Activated CD4-positive, alpha-beta memory T cell treated with anti-CD3 and anti-CD28 coated beads for 36 hours (primary cell): ENCODE measurements at regions of chr1 and their contacts with region 1.

Region 1: DNA sequence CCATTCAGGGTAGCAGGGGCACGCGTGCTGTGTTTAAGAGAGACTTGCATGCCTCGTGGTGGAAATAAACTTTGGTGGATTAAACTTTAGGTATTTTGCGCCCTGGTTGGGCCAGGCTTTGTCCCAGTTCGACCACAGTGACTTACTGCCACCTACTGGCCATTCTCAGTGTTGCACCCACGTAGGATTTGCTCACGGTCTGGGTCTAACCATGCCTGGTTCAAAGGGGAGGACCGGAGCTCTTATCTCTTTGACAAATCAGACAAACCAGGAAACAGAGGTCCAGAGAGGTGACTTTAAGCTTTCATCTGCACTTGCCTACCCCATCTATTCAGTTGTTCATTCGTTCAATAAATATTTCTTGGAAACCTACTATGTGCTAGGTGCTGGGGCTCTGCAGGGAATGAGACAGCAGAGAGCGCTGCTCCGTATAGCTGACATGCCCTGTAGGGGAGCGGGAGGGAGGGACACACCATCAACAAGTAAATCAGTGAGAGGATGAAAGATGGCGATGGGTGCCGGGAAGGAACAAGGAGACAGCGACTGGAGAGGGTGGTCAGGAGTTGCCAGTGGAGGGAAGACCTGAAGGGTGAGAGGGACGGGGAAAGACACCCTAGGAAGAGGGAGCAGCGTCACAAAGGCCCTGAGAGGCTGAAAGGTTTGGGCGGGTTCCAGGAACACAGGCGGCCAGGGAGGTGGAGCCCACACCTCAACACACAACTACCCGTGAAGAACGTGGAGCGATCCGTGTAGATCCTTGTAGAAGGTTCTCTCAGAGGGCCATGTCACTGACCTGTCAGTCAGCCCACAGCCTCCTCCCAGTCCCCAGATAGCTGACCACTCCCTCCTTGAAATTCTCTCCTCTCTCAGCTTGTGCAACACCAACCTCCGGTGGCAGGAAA is 27.2 kb upstream of the TINAGL1 start:
- DNase-seq: peak; percentile 93
- H3K4me3 Mint-ChIP-seq: peak overlapping the region; percentile 49
- H3K27ac Mint-ChIP-seq: no peak overlapping the region
- H3K4me1 Mint-ChIP-seq: peaks cover 13% of the 10 kb centered on the region
- H3K27me3 Mint-ChIP-seq: peaks cover 9% of the 10 kb centered on the region

Region 2: GRCh38 chr1:31182352-31182751 is 366.8 kb before region 1 on chr1:
- CTCF ChIA-PET with region 1: interaction called, 5 read pairs
- POLR2A ChIA-PET with region 1: no interaction called
- intact Hi-C with region 1: loop called (anchors 5 kb)
- DNase-seq: peak; percentile 66
- H3K4me3 Mint-ChIP-seq: no peak overlapping the region
- H3K27ac Mint-ChIP-seq: no peak overlapping the region
- H3K4me1 Mint-ChIP-seq: peaks cover 13% of the 10 kb centered on the region
- H3K27me3 Mint-ChIP-seq: peaks cover 34% of the 10 kb centered on the region

Region 3: GRCh38 chr1:31394628-31395193 is 154.4 kb before region 1 on chr1:
- CTCF ChIA-PET with region 1: interaction called, 86 read pairs
- POLR2A ChIA-PET with region 1: no interaction called
- intact Hi-C with region 1: loop called (anchors 1 kb)
- DNase-seq: peak; percentile 87
- H3K4me3 Mint-ChIP-seq: peak overlapping the region; percentile 75
- H3K27ac Mint-ChIP-seq: no peak overlapping the region
- H3K4me1 Mint-ChIP-seq: peaks cover 8% of the 10 kb centered on the region
- H3K27me3 Mint-ChIP-seq: peaks cover 4% of the 10 kb centered on the region

Region 4: GRCh38 chr1:31460027-31460426 is 89.1 kb before region 1 on chr1:
- CTCF ChIA-PET with region 1: interaction called, 6 read pairs
- POLR2A ChIA-PET with region 1: no interaction called
- intact Hi-C with region 1: loop called (anchors 10 kb)
- DNase-seq: no peak
- H3K4me3 Mint-ChIP-seq: no peak overlapping the region
- H3K27ac Mint-ChIP-seq: no peak overlapping the region
- H3K4me1 Mint-ChIP-seq: no peaks in the 10 kb centered on the region
- H3K27me3 Mint-ChIP-seq: peaks cover 38% of the 10 kb centered on the region

Region 5: GRCh38 chr1:31564134-31564989 is 15.2 kb after region 1 on chr1:
- CTCF ChIA-PET with region 1: interaction called, 18 read pairs
- POLR2A ChIA-PET with region 1: no interaction called
- intact Hi-C with region 1: no loop called
- DNase-seq: peak; percentile 65
- H3K4me3 Mint-ChIP-seq: no peak overlapping the region
- H3K27ac Mint-ChIP-seq: no peak overlapping the region
- H3K4me1 Mint-ChIP-seq: no peaks in the 10 kb centered on the region
- H3K27me3 Mint-ChIP-seq: peaks cover 21% of the 10 kb centered on the region

Region 6: GRCh38 chr1:31683997-31684396 is 134.8 kb after region 1 on chr1:
- CTCF ChIA-PET with region 1: no interaction called
- POLR2A ChIA-PET with region 1: no interaction called
- intact Hi-C with region 1: no loop called
- DNase-seq: peak; percentile 16
- H3K4me3 Mint-ChIP-seq: no peak overlapping the region
- H3K27ac Mint-ChIP-seq: no peak overlapping the region
- H3K4me1 Mint-ChIP-seq: no peaks in the 10 kb centered on the region
- H3K27me3 Mint-ChIP-seq: peaks cover 10% of the 10 kb centered on the region

Region 7: GRCh38 chr1:31739346-31739745 is 190.2 kb after region 1 on chr1:
- CTCF ChIA-PET with region 1: no interaction called
- POLR2A ChIA-PET with region 1: no interaction called
- intact Hi-C with region 1: no loop called
- DNase-seq: peak; percentile 76
- H3K4me3 Mint-ChIP-seq: no peak overlapping the region
- H3K27ac Mint-ChIP-seq: no peak overlapping the region
- H3K4me1 Mint-ChIP-seq: peaks cover 17% of the 10 kb centered on the region
- H3K27me3 Mint-ChIP-seq: no peaks in the 10 kb centered on the region